ENCODE measurements at regions of chr6 and their contacts with region 1.

Region 1: DNA sequence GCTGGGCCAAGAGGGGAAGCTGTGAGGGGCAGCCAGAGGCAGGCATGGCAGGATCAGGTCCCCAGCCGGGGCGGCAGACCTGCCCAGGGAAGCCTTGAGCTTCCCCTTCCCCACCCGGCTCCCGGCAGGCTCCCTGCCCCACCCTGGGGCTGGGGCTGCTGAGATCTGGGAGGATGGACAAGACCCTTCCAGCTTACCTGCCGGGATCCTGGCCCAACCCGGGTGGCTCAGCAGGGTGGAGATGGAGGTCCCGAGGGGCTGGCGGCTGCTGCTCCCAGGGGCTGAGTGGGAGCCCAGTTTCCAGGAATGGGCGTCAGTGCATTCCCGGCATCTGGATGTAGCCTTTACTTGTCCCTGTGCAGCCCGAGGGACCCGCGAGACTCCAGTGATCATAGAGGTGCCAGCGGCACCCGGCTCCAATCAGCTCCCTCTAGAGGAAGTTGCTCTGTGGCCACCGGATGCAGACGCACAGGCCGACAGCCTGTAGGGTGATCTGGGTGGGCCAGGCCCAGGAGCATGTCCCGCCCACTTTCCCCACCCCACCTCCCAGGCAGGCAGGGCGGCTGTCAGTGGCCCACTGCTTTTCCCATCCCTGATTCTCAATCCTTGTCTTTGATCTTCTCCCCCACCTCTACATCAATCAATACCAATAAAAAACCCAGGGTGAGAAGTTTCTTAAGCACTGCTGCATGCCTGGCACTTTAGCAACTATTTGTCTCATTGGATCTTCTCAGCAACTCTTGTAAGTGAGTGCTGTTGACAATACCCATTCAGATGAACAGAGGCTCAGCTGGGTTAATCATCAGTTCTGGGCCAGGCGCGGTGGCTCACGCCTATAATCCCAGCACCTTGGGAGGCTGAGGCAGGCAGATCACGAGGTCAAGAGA is at the start of gene BAK1:
- DNase-seq: peak; percentile 89 to 92
- H3K4me3 ChIP-seq: peak within 1 kb of the TSS; percentile 65
- H3K4me3 Mint-ChIP-seq: peak within 1 kb of the TSS; percentile 84
- H3K27ac Mint-ChIP-seq: peak within 1 kb of the TSS; percentile 53
- H3K4me1 ChIP-seq: peaks cover 10% of the 10 kb centered on the region
- H3K4me1 Mint-ChIP-seq: no peaks in the 10 kb centered on the region
- H3K27me3 ChIP-seq: no peaks in the 10 kb centered on the region
- H3K27me3 Mint-ChIP-seq: no peaks in the 10 kb centered on the region
- CTCF ChIP-seq: peak; percentile 55 to 72
- total RNA-seq, gene BAK1: 28.5 and 29.4 TPM in 2 replicates

Region 2: GRCh38 chr6:33508935-33509926 is 70.8 kb before region 1 on chr6:
- CTCF ChIA-PET with region 1: interaction called, 12 read pairs
- POLR2A ChIA-PET with region 1: no interaction called
- intact Hi-C with region 1: no loop called
- DNase-seq: no peak
- H3K4me3 ChIP-seq: no peak overlapping the region
- H3K4me3 Mint-ChIP-seq: no peak overlapping the region
- H3K27ac Mint-ChIP-seq: peak overlapping the region; percentile 35
- H3K4me1 ChIP-seq: peaks cover 21% of the 10 kb centered on the region
- H3K4me1 Mint-ChIP-seq: peaks cover 26% of the 10 kb centered on the region
- H3K27me3 ChIP-seq: no peaks in the 10 kb centered on the region
- H3K27me3 Mint-ChIP-seq: no peaks in the 10 kb centered on the region
- CTCF ChIP-seq: no peak

Measured in Caco-2 (cell line).